Caco-2 (cell line): ENCODE measurements at regions of chr13 and their contacts with region 1.

Region 1: DNA sequence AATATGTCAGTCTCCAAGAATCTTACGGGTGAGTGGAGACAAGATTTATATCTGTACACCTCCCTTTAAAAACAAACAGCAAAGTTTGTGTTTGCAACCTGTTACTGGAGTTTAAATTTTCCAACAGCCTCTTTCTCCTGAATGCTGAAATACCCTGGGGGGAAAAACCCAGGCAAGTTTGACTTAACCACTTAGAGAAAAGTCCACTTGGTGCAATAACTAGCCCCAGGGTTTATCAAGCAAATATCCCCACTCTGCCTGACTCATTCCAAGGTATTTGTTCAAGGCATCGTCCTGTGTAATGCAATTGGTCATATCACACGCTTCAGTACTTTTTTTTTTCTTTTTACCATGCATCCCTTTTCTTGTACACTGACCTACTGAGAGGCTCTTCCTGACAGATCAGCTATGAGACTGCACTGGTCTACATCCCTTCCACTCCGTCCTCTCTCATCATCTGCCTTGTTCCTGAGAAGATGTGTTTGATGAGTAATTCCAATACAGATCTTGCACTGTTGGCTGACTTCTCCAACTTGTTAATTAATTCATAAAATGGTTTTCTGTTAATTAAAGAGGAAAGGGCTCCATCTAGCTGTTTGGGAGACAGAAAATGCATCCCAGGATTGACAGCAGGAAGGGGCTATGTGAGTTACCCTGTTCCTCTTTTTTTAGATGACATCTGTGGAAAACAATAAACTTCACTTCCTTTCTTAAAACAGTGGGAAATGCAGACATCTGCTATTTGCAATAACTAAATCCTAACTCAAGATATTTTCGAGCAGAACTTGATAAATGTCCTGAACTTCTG is 212.5 kb upstream of the IRS2 start:
- DNase-seq: peak; percentile 72 to 78
- H3K4me3 ChIP-seq: no peak overlapping the region
- H3K4me3 Mint-ChIP-seq: peak overlapping the region; percentile 22
- H3K27ac Mint-ChIP-seq: peak overlapping the region; percentile 32
- H3K4me1 ChIP-seq: peaks cover 42% of the 10 kb centered on the region
- H3K4me1 Mint-ChIP-seq: peaks cover 43% of the 10 kb centered on the region
- H3K27me3 ChIP-seq: no peaks in the 10 kb centered on the region
- H3K27me3 Mint-ChIP-seq: no peaks in the 10 kb centered on the region
- CTCF ChIP-seq: no peak

Region 2: DNA sequence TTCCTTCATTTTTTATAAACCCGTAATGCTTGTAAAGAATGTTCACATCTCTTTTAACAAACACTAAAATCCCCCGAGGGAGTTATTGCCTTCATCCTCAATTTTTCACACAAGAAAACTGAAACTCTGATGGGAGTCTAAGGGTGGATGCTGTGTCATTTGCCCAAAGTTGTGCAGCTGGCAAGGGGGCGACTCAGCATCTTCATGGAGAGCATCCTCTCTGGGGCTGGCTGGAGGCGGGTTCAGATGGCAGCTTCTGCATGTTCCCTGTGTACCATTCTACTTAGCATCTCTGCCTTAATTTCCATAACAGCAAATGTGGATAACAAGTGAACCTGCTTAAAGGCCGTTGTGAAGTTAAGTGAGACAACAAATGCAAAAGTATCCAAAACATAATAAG is 469.0 kb before region 1 on chr13:
- CTCF ChIA-PET with region 1: no interaction called
- POLR2A ChIA-PET with region 1: no interaction called
- intact Hi-C with region 1: no loop called
- DNase-seq: no peak
- H3K4me3 ChIP-seq: no peak overlapping the region
- H3K4me3 Mint-ChIP-seq: no peak overlapping the region
- H3K27ac Mint-ChIP-seq: no peak overlapping the region
- H3K4me1 ChIP-seq: no peaks in the 10 kb centered on the region; the same call in 1 of the 2 replicates
- H3K4me1 Mint-ChIP-seq: no peaks in the 10 kb centered on the region
- H3K27me3 ChIP-seq: 0 out of 2 replicates have a peak, but pooled peaks cover 2% of the 10 kb centered on the region
- H3K27me3 Mint-ChIP-seq: no peaks in the 10 kb centered on the region
- CTCF ChIP-seq: no peak

Region 3: DNA sequence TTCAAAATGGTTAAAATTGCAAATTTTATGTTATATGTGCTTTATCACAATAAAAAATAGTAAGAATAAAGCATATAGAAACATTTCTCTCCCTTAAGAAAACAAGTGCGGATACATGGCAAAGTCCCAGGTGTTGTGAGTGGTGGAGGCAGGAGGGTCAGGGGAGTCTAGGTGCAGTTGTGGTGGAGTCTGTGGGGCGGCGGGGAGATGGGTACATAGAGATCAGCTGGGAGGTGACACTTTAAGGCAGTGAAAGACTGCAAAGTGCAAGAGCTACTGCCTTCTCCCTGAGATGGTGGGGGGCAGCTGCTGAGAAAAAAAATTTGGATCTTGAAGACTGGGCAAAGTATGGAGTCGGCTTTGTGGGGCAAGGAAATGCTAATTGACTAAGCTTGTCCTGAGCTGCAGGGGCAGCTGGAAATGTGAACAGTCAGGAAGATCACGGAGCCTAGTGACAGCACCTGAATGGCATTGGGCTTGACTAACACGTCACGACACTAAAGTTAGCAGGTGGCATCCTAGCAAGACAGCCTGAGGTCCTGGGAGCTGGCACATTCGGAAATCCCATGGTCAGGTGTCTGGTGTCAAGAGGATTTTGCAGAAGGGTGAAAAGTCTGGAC is 139.6 kb before region 1 on chr13:
- CTCF ChIA-PET with region 1: no interaction called
- POLR2A ChIA-PET with region 1: no interaction called
- intact Hi-C with region 1: no loop called
- DNase-seq: no peak
- H3K4me3 ChIP-seq: no peak overlapping the region
- H3K4me3 Mint-ChIP-seq: no peak overlapping the region
- H3K27ac Mint-ChIP-seq: no peak overlapping the region
- H3K4me1 ChIP-seq: no peaks in the 10 kb centered on the region
- H3K4me1 Mint-ChIP-seq: peaks cover 6% of the 10 kb centered on the region
- H3K27me3 ChIP-seq: no peaks in the 10 kb centered on the region
- H3K27me3 Mint-ChIP-seq: peaks cover 14% of the 10 kb centered on the region
- CTCF ChIP-seq: no peak

Region 4: GRCh38 chr13:109933476-109933875 is 65.5 kb before region 1 on chr13:
- CTCF ChIA-PET with region 1: no interaction called
- POLR2A ChIA-PET with region 1: no interaction called
- intact Hi-C with region 1: no loop called
- DNase-seq: no peak
- H3K4me3 ChIP-seq: no peak overlapping the region
- H3K4me3 Mint-ChIP-seq: no peak overlapping the region
- H3K27ac Mint-ChIP-seq: no peak overlapping the region
- H3K4me1 ChIP-seq: no peaks in the 10 kb centered on the region
- H3K4me1 Mint-ChIP-seq: no peaks in the 10 kb centered on the region
- H3K27me3 ChIP-seq: no peaks in the 10 kb centered on the region
- H3K27me3 Mint-ChIP-seq: no peaks in the 10 kb centered on the region
- CTCF ChIP-seq: no peak

Region 5: DNA sequence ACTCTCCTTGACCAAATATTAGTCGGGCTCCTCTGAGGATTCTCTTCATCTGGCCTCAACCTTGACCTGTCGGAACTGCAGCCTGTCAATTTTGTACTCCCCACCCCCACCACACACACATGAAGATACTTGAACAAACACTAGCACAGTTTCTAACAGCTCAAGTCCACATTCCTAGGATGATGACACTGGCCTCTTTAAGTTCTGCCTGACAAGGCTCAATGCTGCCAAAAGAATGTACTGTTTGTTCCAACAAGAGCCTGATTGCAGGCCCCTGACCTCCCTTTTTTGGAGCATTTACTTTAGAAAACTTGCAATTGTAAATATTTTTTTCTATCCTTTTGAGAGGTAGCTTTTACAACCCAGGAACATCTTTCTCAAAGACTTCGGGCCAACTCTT is 43.3 kb before region 1 on chr13:
- CTCF ChIA-PET with region 1: interaction called, 3 read pairs
- POLR2A ChIA-PET with region 1: no interaction called
- intact Hi-C with region 1: loop called (anchors 1 kb)
- DNase-seq: peak; percentile 46 to 69
- H3K4me3 ChIP-seq: no peak overlapping the region
- H3K4me3 Mint-ChIP-seq: peak overlapping the region; percentile 26
- H3K27ac Mint-ChIP-seq: peak overlapping the region; percentile 85
- H3K4me1 ChIP-seq: peaks cover 14% of the 10 kb centered on the region
- H3K4me1 Mint-ChIP-seq: peaks cover 8% of the 10 kb centered on the region
- H3K27me3 ChIP-seq: no peaks in the 10 kb centered on the region
- H3K27me3 Mint-ChIP-seq: no peaks in the 10 kb centered on the region
- CTCF ChIP-seq: no peak

Region 6: GRCh38 chr13:110012102-110012739 is 13.3 kb after region 1 on chr13:
- CTCF ChIA-PET with region 1: interaction called, 3 read pairs
- POLR2A ChIA-PET with region 1: no interaction called
- intact Hi-C with region 1: loop called (anchors 1 kb)
- DNase-seq: peak; percentile 23 to 50
- H3K4me3 ChIP-seq: no peak overlapping the region
- H3K4me3 Mint-ChIP-seq: peak overlapping the region; percentile 10
- H3K27ac Mint-ChIP-seq: peak overlapping the region; percentile 63
- H3K4me1 ChIP-seq: peaks cover 32% of the 10 kb centered on the region
- H3K4me1 Mint-ChIP-seq: peaks cover 18% of the 10 kb centered on the region
- H3K27me3 ChIP-seq: no peaks in the 10 kb centered on the region
- H3K27me3 Mint-ChIP-seq: no peaks in the 10 kb centered on the region
- CTCF ChIP-seq: no peak